CD14-positive monocyte (primary cell): ENCODE measurements at regions of chr2 and their contacts with region 1.

Region 1: DNA sequence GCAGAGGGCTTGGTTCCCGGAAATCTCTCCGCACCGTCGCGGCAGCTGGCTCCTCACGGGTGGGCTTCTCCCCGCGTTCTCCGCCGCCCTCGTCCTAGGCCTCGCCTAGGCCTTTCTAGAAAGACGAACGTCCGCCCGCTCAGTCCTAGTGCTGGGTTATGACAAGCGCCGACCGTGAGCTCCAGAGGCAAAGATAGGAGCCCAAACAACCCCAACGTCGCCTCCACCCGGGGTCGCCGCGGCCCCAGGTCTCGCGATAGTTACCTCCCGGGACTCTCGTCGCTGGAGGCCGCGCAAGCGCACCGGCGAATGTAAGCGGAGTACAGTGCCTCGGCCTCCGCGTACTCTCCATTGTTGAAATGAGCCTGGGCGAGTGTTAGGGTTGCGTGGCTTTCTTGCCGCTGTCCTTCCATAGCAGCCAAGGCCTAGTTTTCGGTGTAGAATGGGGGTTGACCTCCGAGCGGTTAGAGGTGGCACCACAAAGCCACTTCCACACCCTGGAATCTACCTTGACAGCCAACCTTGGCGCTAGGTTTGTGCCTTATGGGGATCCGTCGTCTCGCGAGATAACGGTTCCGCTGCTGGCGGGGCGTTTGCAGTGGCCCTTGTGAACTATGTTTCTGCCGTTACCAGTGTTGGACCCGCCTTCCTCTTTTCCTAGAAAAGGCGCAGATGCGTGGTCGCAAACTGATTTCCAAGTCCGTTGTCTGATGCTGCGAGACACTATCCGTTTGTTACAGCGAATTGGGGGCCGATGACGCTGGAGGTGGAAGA is at the start of gene TTC32:
- DNase-seq: peak; percentile 91 to 93 (median 92)
- H3K4me3 ChIP-seq: peak within 1 kb of the TSS; percentile 81 to 98 (median 94)
- H3K4me3 Mint-ChIP-seq: peak within 1 kb of the TSS; percentile 92 to 98
- H3K27ac ChIP-seq: peak within 1 kb of the TSS; percentile 98 to 99
- H3K27ac Mint-ChIP-seq: peak within 1 kb of the TSS; percentile 97 to 99 (median 98)
- H3K4me1 ChIP-seq: peaks cover 32 to 39% of the 10 kb centered on the region in 2 donors
- H3K4me1 Mint-ChIP-seq: peaks cover 35% of the 10 kb centered on the region
- H3K27me3 ChIP-seq: no peaks in the 10 kb centered on the region
- H3K27me3 Mint-ChIP-seq: peaks cover 2 to 3% (median 3%) of the 10 kb centered on the region in 3 donors
- CTCF ChIP-seq: no peak
- polyA plus RNA-seq, gene TTC32: 17.6 to 27.7 (median 20.1) TPM

Region 2: GRCh38 chr2:19131858-19132257 is 769.8 kb before region 1 on chr2:
- intact Hi-C with region 1: no loop called
- DNase-seq: no peak
- H3K4me3 ChIP-seq: no peak overlapping the region
- H3K4me3 Mint-ChIP-seq: no peak overlapping the region
- H3K27ac ChIP-seq: no peak overlapping the region
- H3K27ac Mint-ChIP-seq: no peak overlapping the region
- H3K4me1 ChIP-seq: no peaks in the 10 kb centered on the region
- H3K4me1 Mint-ChIP-seq: no peaks in the 10 kb centered on the region
- H3K27me3 ChIP-seq: no peaks in the 10 kb centered on the region
- H3K27me3 Mint-ChIP-seq: peaks cover 0 to 3% (median 3%) of the 10 kb centered on the region in 3 donors
- CTCF ChIP-seq: no peak

Region 3: GRCh38 chr2:20051532-20052228 is 150.1 kb after region 1 on chr2 and contains the start of gene LAPTM4A:
- intact Hi-C with region 1: loop called (anchors 2 to 5 kb)
- DNase-seq: peak; percentile 97 to 99 (median 99)
- H3K4me3 ChIP-seq: peak within 1 kb of the TSS; percentile 83 to 95 (median 83)
- H3K4me3 Mint-ChIP-seq: no peak within 1 kb of the TSS
- H3K27ac ChIP-seq: peak within 1 kb of the TSS; percentile 94 to 98
- H3K27ac Mint-ChIP-seq: no peak within 1 kb of the TSS
- H3K4me1 ChIP-seq: peaks cover 27 to 34% of the 10 kb centered on the region in 2 donors
- H3K4me1 Mint-ChIP-seq: peaks cover 28% of the 10 kb centered on the region
- H3K27me3 ChIP-seq: peaks cover 4 to 20% of the 10 kb centered on the region in 2 donors
- H3K27me3 Mint-ChIP-seq: peaks cover 12 to 28% (median 16%) of the 10 kb centered on the region in 3 donors
- CTCF ChIP-seq: no peak
- polyA plus RNA-seq, gene LAPTM4A: 182 to 442 (median 421) TPM

Region 4: GRCh38 chr2:20650880-20651730 is 749.5 kb after region 1 on chr2 and contains the start of gene HS1BP3:
- intact Hi-C with region 1: loop called in 1 of 2 experiments (anchors 10 kb)
- DNase-seq: peak; percentile 82 to 90 (median 85)
- H3K4me3 ChIP-seq: peak within 1 kb of the TSS; percentile 68 to 86 (median 80)
- H3K4me3 Mint-ChIP-seq: peak within 1 kb of the TSS; percentile 88 to 99
- H3K27ac ChIP-seq: peak within 1 kb of the TSS; percentile 63 to 97
- H3K27ac Mint-ChIP-seq: peak within 1 kb of the TSS; percentile 93 to 97 (median 95)
- H3K4me1 ChIP-seq: peaks cover 36 to 41% of the 10 kb centered on the region in 2 donors
- H3K4me1 Mint-ChIP-seq: peaks cover 49% of the 10 kb centered on the region
- H3K27me3 ChIP-seq: no peaks in the 10 kb centered on the region
- H3K27me3 Mint-ChIP-seq: peaks cover 3 to 4% (median 3%) of the 10 kb centered on the region in 3 donors
- CTCF ChIP-seq: peak; percentile 97
- polyA plus RNA-seq, gene HS1BP3: 45.1 to 48.9 (median 45.4) TPM